HCT116 (cell line): ENCODE measurements at regions of chr14 and their contacts with region 1.

Region 1: DNA sequence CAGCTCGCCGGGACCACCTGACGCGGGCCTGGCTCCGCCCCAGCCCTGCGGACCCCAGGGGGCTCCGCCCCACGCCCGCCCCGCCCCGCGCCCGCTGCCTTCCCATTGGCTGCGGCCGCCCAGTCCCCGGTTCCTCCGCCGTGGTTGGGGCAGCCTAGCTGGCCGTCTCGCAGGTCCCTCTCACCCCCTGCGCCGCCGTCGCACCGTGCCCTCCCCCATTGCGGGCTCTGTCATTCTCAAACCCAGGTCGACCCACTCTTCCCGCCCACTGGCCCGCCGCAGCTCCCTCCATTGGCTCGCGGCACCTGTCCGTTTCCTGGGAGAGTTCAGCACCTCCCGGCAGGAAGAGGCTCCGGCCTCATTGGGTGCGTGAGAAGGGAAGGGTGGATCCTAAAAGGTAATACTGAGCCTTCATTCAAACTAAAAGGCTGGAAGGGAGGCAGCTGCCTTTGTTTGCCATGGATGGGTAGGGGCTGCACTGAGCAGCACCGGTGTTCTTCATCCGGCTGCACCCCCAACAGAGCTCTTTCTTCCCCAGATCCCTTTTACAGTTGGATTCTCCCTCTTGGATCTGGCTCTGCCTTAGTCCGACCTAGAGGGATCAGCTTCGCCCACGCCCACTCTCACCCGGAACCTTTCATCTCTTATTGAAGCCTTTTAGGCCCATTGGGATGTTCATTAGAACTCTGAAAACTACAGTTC is 381 bp upstream of the MAP3K9 start:
- DNase-seq: peak; percentile 96
- ATAC-seq: peak; percentile 92
- H3K4me3 ChIP-seq: peak overlapping the region; percentile 75 to 79
- H3K27ac ChIP-seq: peak overlapping the region; percentile 71
- H3K4me1 ChIP-seq: peaks cover 17 to 29% of the 10 kb centered on the region in 2 experiments
- H3K27me3 ChIP-seq: no peaks in the 10 kb centered on the region
- CTCF ChIP-seq: no peak
- POLR2A ChIP-seq: no peak
- RAD21 ChIP-seq: no peak

Region 2: GRCh38 chr14:70907176-70907995 is 97.7 kb after region 1 on chr14 and contains the start of gene PCNX1:
- CTCF ChIA-PET with region 1: interaction called, 11 read pairs
- POLR2A ChIA-PET with region 1: no interaction called
- RAD21 ChIA-PET with region 1: no interaction called
- intact Hi-C with region 1: no loop called
- DNase-seq: peak; percentile 46
- ATAC-seq: peak; percentile 86
- H3K4me3 ChIP-seq: peak within 1 kb of the TSS; percentile 61 to 75
- H3K27ac ChIP-seq: peak within 1 kb of the TSS; percentile 74
- H3K4me1 ChIP-seq: peaks cover 9 to 30% of the 10 kb centered on the region in 2 experiments
- H3K27me3 ChIP-seq: no peaks in the 10 kb centered on the region
- CTCF ChIP-seq: peak; percentile 50 to 87 (median 66); a peak in 5 of 6 replicates
- POLR2A ChIP-seq: peak; percentile 24
- RAD21 ChIP-seq: peak; percentile 41
- total RNA-seq, gene PCNX1: 52.2 TPM